ENCODE measurements at regions of chr14 and their contacts with region 1.

Region 1: GRCh38 chr14:71529848-71530247 is 402.4 kb upstream of the RGS6 start:
- DNase-seq: peak in 1 of 2 donors; percentile 78
- ATAC-seq: peak; percentile 90
- H3K4me3 ChIP-seq: no peak overlapping the region
- H3K27ac ChIP-seq: peak overlapping the region in 1 of 2 donors; percentile 73
- H3K4me1 ChIP-seq: peaks cover 0 to 4% of the 10 kb centered on the region in 2 donors
- H3K27me3 ChIP-seq: no peaks in the 10 kb centered on the region

Region 2: GRCh38 chr14:71665157-71665556 is 135.3 kb after region 1 on chr14:
- intact Hi-C with region 1: loop called in 1 of 2 experiments (anchors 5 kb)
- DNase-seq: no peak
- ATAC-seq: no peak
- H3K4me3 ChIP-seq: no peak overlapping the region
- H3K27ac ChIP-seq: no peak overlapping the region
- H3K4me1 ChIP-seq: peaks cover 2 to 12% of the 10 kb centered on the region in 2 donors
- H3K27me3 ChIP-seq: no peaks in the 10 kb centered on the region